A549 (cell line): ENCODE measurements at regions of chr19 and their contacts with region 1.

Region 1: DNA sequence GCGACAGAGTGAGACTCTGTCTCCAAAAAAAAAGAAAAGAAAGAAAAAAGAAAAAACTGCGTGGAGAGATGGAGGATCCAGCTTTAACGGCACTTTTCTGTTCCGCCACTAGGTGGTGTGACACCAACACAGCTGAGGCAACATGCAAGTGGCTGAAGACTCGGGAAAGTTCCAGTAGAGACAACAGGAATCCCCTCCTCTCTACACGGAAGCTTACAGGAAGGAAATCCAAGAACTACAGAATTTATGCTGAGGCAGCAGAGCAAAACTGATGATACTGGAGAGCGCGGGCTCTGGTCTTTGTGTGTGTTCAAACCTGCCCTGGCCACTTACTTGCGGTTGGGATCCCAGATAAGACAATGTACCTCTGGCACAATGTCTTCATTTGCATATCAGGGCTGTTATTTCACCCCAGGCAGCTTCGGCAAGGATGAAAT is 9.9 kb downstream of the RANBP3 start:
- DNase-seq: peak; percentile 68 to 74
- ATAC-seq: peak; percentile 85 to 94
- H3K4me3 ChIP-seq: no peak overlapping the region
- H3K27ac ChIP-seq: peak overlapping the region in 1 of 2 experiments; percentile 52; a peak in 1 of 6 replicates
- H3K4me1 ChIP-seq: peaks cover 4% of the 10 kb centered on the region; the same call in 2 of the 3 replicates
- CTCF ChIP-seq: peak; percentile 63
- EP300 ChIP-seq: no peak
- POLR2A ChIP-seq: no peak
- RAD21 ChIP-seq: peak; percentile 25 to 27; a peak in 1 of 5 replicates

Region 2: GRCh38 chr19:5947435-5947834 is 20.6 kb before region 1 on chr19:
- CTCF ChIA-PET with region 1: interaction called, 47 read pairs
- POLR2A ChIA-PET with region 1: no interaction called
- DNase-seq: no peak
- ATAC-seq: no peak
- H3K4me3 ChIP-seq: no peak overlapping the region
- H3K27ac ChIP-seq: no peak overlapping the region
- H3K4me1 ChIP-seq: no peaks in the 10 kb centered on the region
- CTCF ChIP-seq: no peak
- EP300 ChIP-seq: no peak
- POLR2A ChIP-seq: no peak
- RAD21 ChIP-seq: no peak

Region 3: DNA sequence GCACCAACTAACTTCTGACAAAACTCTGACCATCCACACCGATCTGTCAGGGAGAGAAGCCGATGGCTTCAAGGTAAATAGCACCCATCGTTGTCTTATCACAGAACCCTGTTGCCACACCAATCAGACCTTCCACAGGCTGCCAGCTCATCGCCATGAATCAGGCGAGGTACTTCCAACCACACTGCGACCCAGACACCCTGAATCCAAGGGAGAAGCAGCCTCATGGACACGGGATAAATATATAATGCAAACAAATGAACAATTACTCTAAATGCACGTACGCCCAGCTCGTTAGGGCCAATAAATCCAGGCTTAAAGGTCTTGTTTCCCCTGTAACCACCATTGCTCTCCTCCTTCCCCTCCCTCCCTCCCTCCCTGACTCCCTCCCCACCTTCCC is 10.8 kb before region 1 on chr19:
- CTCF ChIA-PET with region 1: interaction called, 47 read pairs
- POLR2A ChIA-PET with region 1: no interaction called
- DNase-seq: no peak
- ATAC-seq: no peak; a peak in 1 of 6 replicates
- H3K4me3 ChIP-seq: no peak overlapping the region
- H3K27ac ChIP-seq: no peak overlapping the region
- H3K4me1 ChIP-seq: peaks cover 32% of the 10 kb centered on the region; the same call in 2 of the 3 replicates
- CTCF ChIP-seq: no peak
- EP300 ChIP-seq: no peak
- POLR2A ChIP-seq: no peak
- RAD21 ChIP-seq: no peak

Region 4: DNA sequence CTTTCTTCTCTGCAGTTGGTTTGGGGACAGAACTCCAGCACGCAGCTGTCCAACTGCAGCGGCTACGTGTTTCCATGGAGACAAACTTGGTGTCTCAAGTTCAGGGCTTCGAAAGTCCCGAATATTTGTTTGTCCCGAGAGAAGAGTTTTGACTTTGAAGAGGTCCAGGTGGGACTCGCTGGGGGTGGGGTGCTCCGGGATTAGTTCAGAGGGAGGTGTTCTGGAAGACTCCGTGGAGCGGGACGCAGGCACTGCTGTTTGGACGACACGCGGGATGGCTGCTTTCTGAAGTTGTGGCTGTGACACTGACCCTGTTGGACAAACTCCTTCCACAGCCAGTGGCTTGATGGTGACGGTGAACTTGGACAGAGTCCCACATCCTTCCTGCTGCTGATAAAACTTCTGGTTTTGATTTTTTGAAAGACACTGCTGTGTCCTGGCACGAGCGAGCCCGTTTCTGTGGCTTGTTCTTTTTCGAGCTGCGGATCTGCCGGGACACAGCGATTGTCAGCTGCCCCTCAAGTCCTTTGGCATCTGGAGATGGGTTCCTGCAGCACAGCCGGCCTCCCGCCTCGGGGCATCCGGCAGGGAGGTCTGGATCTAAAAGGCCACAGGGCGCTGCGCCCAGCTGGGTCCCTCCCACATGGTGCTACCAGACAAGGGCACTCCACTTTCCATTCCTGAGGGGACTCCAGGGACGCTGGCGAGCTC is 25.8 kb after region 1 on chr19:
- CTCF ChIA-PET with region 1: no interaction called
- POLR2A ChIA-PET with region 1: no interaction called
- DNase-seq: no peak
- ATAC-seq: no peak
- H3K4me3 ChIP-seq: no peak overlapping the region
- H3K27ac ChIP-seq: no peak overlapping the region
- H3K4me1 ChIP-seq: peaks cover 5% of the 10 kb centered on the region; the same call in 1 of the 3 replicates
- CTCF ChIP-seq: no peak
- EP300 ChIP-seq: no peak
- POLR2A ChIP-seq: no peak
- RAD21 ChIP-seq: no peak

Region 5: GRCh38 chr19:6056282-6056741 is 88.3 kb after region 1 on chr19:
- CTCF ChIA-PET with region 1: no interaction called
- POLR2A ChIA-PET with region 1: no interaction called
- DNase-seq: peak in 1 of 2 experiments; percentile 32
- ATAC-seq: peak in 1 of 2 experiments; percentile 29; a peak in 3 of 6 replicates
- H3K4me3 ChIP-seq: no peak overlapping the region
- H3K27ac ChIP-seq: peak overlapping the region; percentile 32 to 75; a peak in 5 of 6 replicates
- H3K4me1 ChIP-seq: peaks cover 31% of the 10 kb centered on the region
- CTCF ChIP-seq: no peak
- EP300 ChIP-seq: no peak
- POLR2A ChIP-seq: no peak
- RAD21 ChIP-seq: no peak